Activated CD8-positive, alpha-beta T cell treated with anti-CD3 and anti-CD28 coated beads, Interleukin-2, amount 10 ng/mL, durations not matched to agents 7 days and 5 days (primary cell): ENCODE measurements at regions of chr16 and their contacts with region 1.

Region 1: GRCh38 chr16:84970447-84971127 is 40.7 kb downstream of the ZDHHC7 start:
- DNase-seq: peak; percentile 84
- ATAC-seq: peak; percentile 98
- H3K4me3 Mint-ChIP-seq: no peak overlapping the region
- H3K27ac Mint-ChIP-seq: no peak overlapping the region
- H3K4me1 Mint-ChIP-seq: peaks cover 5% of the 10 kb centered on the region
- H3K27me3 Mint-ChIP-seq: peaks cover 2% of the 10 kb centered on the region

Region 2: DNA sequence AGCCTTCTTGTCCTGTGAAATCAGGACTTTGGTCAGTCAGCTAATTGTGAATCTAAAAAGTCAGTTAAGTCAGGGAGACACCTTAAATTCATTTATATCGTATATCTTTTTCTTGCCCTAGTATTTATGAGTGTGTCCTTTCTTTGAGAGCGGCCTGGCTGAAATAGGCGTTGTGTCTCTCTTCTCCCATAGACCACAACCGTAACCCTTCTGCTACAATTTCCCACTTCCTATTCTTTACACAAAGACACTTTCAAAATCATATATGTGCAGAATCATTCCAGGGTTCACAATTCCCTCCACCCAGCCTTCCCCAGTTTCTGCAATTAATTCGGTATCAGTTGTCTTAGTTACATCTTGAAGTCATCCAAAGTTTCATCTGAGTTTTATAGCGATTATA is 338.7 kb before region 1 on chr16:
- CTCF ChIA-PET with region 1: no interaction called
- POLR2A ChIA-PET with region 1: no interaction called
- DNase-seq: no peak
- ATAC-seq: no peak
- H3K4me3 Mint-ChIP-seq: peak overlapping the region; percentile 9
- H3K27ac Mint-ChIP-seq: no peak overlapping the region
- H3K4me1 Mint-ChIP-seq: peaks cover 27% of the 10 kb centered on the region
- H3K27me3 Mint-ChIP-seq: peaks cover 30% of the 10 kb centered on the region

Region 3: DNA sequence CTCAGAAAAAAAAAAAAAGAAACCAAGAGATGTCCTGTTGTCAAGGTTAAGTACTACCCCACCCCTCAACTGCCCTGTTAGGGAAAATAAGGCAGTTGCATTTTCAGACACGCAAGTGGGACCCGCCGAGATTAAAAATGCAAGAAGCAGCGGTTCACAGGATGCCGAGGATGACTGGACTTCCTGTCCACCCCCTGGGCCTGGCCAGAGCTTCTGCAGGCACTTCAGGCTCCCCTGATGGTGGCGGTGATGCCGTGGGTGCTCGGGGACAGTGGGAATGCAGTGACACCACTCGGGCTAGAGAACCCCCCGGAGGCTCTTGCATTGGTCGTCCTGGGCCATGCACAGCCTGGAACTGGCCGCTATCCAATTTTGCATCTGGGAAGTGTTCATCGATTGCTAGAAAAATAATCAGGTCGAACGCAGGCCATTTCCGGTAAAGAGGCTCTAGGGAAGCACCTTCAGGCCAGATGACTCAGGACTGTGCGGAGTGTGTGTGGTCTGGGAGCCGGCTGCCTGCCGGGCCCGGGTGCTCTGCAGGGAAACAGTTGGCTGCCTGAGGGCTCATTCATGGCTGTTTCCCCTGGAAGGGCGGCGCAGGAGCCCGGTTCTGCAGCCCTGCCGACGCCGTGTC is 164.2 kb before region 1 on chr16:
- CTCF ChIA-PET with region 1: no interaction called
- POLR2A ChIA-PET with region 1: no interaction called
- DNase-seq: no peak
- ATAC-seq: no peak
- H3K4me3 Mint-ChIP-seq: no peak overlapping the region
- H3K27ac Mint-ChIP-seq: no peak overlapping the region
- H3K4me1 Mint-ChIP-seq: peaks cover 26% of the 10 kb centered on the region
- H3K27me3 Mint-ChIP-seq: no peaks in the 10 kb centered on the region

Region 4: DNA sequence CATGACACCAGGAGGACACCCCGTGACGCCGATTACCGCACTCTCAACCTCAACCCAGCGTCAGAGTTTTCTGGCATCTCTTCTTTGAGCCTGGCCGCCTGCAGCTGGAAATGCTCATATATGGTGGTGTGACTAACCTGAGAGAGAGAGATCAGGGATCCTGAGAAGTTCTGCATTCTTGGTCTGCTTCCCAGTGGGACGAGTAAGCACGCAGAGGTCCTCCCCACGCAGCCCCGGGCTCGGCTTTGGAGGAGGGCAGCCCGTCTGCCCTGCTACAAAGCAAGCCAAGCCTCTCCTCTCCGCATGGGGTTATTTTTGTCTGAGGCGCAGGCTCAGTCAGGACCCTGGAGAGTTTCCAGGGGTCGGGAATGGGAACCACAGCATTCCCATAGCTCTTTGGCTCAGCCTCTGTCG is 134.3 kb before region 1 on chr16:
- CTCF ChIA-PET with region 1: no interaction called
- POLR2A ChIA-PET with region 1: no interaction called
- DNase-seq: no peak
- ATAC-seq: no peak
- H3K4me3 Mint-ChIP-seq: no peak overlapping the region
- H3K27ac Mint-ChIP-seq: no peak overlapping the region
- H3K4me1 Mint-ChIP-seq: no peaks in the 10 kb centered on the region
- H3K27me3 Mint-ChIP-seq: peaks cover 13% of the 10 kb centered on the region

Region 5: DNA sequence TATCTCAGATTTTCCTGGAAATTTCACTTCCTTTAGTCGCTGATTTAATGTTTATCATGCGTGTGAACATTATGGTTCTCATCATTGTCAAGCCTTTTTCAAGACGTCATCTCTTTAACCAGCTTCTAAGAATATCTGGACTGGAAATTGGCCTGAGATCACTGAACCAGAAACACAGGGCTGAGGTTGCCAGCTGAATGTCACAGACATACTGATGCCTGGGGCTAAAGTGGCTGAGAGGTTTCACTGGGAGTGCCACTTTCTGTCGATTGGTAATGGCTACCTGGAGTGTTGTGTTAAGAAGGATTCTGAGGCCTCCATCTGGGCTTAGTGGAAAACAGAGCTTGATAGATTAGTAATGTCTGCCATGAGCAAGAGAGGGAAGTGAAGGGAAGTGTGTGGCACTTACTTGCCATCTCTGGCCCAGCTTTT is 96.6 kb before region 1 on chr16:
- CTCF ChIA-PET with region 1: no interaction called
- POLR2A ChIA-PET with region 1: no interaction called
- DNase-seq: no peak
- ATAC-seq: no peak
- H3K4me3 Mint-ChIP-seq: no peak overlapping the region
- H3K27ac Mint-ChIP-seq: no peak overlapping the region
- H3K4me1 Mint-ChIP-seq: no peaks in the 10 kb centered on the region
- H3K27me3 Mint-ChIP-seq: no peaks in the 10 kb centered on the region

Region 6: DNA sequence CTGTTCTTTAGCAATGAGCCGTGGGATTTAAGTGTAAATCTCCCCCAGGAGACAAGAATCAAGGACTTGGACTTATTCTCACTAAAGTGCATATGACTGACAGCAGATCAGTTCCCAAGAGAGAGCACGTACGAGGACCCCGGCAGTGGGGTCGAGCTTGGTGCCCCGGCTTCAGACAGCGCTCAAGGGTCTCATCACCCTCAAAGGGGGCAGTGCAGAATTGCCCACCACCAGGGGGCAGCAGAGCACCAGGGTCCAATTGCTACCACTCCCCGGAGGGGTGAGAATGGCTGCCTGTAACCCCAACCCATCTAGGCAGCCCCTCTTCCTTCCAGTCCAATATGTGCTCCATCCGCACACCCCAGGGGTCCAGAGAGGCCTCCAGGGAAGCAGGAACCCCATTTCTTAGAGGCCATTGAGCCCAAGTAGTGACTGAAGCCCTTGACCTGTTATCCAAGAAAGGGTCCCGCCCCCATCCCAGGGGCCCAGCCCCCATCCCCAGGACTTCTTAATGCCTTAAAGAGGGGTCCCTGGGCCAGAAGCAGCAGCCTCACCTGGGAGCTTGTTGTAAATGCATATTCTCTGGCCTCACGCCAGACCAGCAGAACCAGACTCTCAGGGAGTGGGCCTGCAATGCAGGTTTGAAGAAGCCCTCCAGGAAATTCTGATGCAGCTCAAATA is 45.4 kb before region 1 on chr16:
- CTCF ChIA-PET with region 1: interaction called, 14 read pairs
- POLR2A ChIA-PET with region 1: no interaction called
- DNase-seq: peak; percentile 78
- ATAC-seq: peak; percentile 77
- H3K4me3 Mint-ChIP-seq: no peak overlapping the region
- H3K27ac Mint-ChIP-seq: no peak overlapping the region
- H3K4me1 Mint-ChIP-seq: no peaks in the 10 kb centered on the region
- H3K27me3 Mint-ChIP-seq: no peaks in the 10 kb centered on the region

Region 7: GRCh38 chr16:85010931-85011845 is 40.6 kb after region 1 on chr16 and contains the start of gene ZDHHC7:
- CTCF ChIA-PET with region 1: interaction called, 12 read pairs
- POLR2A ChIA-PET with region 1: no interaction called
- DNase-seq: peak; percentile 91
- ATAC-seq: peak; percentile 94
- H3K4me3 Mint-ChIP-seq: peak within 1 kb of the TSS; percentile 96
- H3K27ac Mint-ChIP-seq: peak within 1 kb of the TSS; percentile 98
- H3K4me1 Mint-ChIP-seq: peaks cover 21% of the 10 kb centered on the region
- H3K27me3 Mint-ChIP-seq: peaks cover 4% of the 10 kb centered on the region
- total RNA-seq, gene ZDHHC7: 28.1 to 28.7 TPM